HEK293 (cell line): ENCODE measurements at regions of chr9 and their contacts with region 1.

Region 1: GRCh38 chr9:69193685-69194032 is 19.6 kb downstream of the TJP2 start:
- H3K4me3 ChIP-seq: no peak overlapping the region
- H3K27ac ChIP-seq: no peak overlapping the region
- H3K4me1 ChIP-seq: no peaks in the 10 kb centered on the region
- CTCF ChIP-seq: no peak

Region 2: DNA sequence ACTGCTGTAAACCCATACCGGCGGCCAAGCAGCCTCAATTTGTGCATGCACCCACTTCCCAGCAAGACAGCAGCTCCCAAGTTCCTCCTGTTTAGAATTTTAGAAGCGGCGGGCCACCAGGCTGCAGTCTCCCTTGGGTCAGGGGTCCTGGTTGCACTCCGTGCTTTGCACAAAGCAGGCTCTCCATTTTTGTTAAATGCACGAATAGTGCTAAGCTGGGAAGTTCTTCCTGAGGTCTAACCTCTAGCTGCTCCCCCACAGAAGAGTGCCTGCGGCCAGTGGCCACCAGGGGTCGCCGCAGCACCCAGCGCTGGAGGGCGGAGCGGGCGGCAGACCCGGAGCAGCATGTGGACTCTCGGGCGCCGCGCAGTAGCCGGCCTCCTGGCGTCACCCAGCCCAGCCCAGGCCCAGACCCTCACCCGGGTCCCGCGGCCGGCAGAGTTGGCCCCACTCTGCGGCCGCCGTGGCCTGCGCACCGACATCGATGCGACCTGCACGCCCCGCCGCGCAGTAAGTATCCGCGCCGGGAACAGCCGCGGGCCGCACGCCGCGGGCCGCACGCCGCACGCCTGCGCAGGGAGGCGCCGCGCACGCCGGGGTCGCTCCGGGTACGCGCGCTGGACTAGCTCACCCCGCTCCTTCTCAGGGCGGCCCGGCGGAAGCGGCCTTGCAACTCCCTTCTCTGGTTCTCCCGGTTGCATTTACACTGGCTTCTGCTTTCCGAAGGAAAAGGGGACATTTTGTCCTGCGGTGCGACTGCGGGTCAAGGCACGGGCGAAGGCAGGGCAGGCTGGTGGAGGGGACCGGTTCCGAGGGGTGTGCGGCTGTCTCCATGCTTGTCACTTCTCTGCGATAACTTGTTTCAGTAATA is 158.0 kb before region 1 on chr9 and contains the start of gene FXN:
- CTCF ChIA-PET with region 1: interaction called, 10 read pairs
- POLR2A ChIA-PET with region 1: interaction called, 3 read pairs
- H3K4me3 ChIP-seq: peak within 1 kb of the TSS; percentile 80
- H3K27ac ChIP-seq: peak within 1 kb of the TSS; percentile 54; the same call in 1 of the 2 replicates
- H3K4me1 ChIP-seq: no peaks in the 10 kb centered on the region
- CTCF ChIP-seq: peak; percentile 84

Region 3: GRCh38 chr9:69044240-69045219 is 149.1 kb before region 1 on chr9:
- CTCF ChIA-PET with region 1: interaction called, 209 read pairs
- POLR2A ChIA-PET with region 1: no interaction called
- H3K4me3 ChIP-seq: no peak overlapping the region
- H3K27ac ChIP-seq: no peak overlapping the region
- H3K4me1 ChIP-seq: peaks cover 3% of the 10 kb centered on the region; the same call in 1 of the 2 replicates
- CTCF ChIP-seq: no peak

Region 4: GRCh38 chr9:69073103-69073502 is 120.6 kb before region 1 on chr9:
- CTCF ChIA-PET with region 1: interaction called, 12 read pairs
- POLR2A ChIA-PET with region 1: no interaction called
- H3K4me3 ChIP-seq: no peak overlapping the region
- H3K27ac ChIP-seq: no peak overlapping the region
- H3K4me1 ChIP-seq: no peaks in the 10 kb centered on the region
- CTCF ChIP-seq: no peak

Region 5: GRCh38 chr9:69180670-69181069 is 13.0 kb before region 1 on chr9:
- CTCF ChIA-PET with region 1: interaction called, 33 read pairs
- POLR2A ChIA-PET with region 1: interaction called, 4 read pairs
- H3K4me3 ChIP-seq: no peak overlapping the region
- H3K27ac ChIP-seq: no peak overlapping the region
- H3K4me1 ChIP-seq: peaks cover 20% of the 10 kb centered on the region
- CTCF ChIP-seq: no peak